ENCODE measurements at regions of chr13 and their contacts with region 1.

Region 1: GRCh38 chr13:75537401-75538365 is at the start of gene COMMD6:
- DNase-seq: peak; percentile 86
- ATAC-seq: peak; percentile 97 to 99
- total RNA-seq, gene COMMD6: 118 to 133 TPM

Region 2: GRCh38 chr13:75489502-75490263 is 48.0 kb before region 1 on chr13:
- intact Hi-C with region 1: loop called in 1 of 2 experiments (anchors 5 kb)
- DNase-seq: no peak
- ATAC-seq: peak in 1 of 2 donors; percentile 35

Measured in left cardiac atrium (tissue), 4 donors.